ENCODE measurements at regions of chr3 and their contacts with region 1.

Region 1: GRCh38 chr3:13850158-13850945 is 29.5 kb downstream of the WNT7A start:
- DNase-seq: peak; percentile 94
- H3K4me3 ChIP-seq: no peak overlapping the region
- H3K27ac ChIP-seq: peak overlapping the region; percentile 51
- H3K4me1 ChIP-seq: peaks cover 69% of the 10 kb centered on the region
- H3K27me3 ChIP-seq: no peaks in the 10 kb centered on the region
- CTCF ChIP-seq: no peak

Region 2: GRCh38 chr3:13788522-13789432 is 61.6 kb before region 1 on chr3:
- CTCF ChIA-PET with region 1: interaction called, 5 read pairs
- dilution Hi-C with region 1: loop called (anchors 5 kb)
- in situ Hi-C with region 1: no loop called
- intact Hi-C with region 1: no loop called
- DNase-seq: no peak
- H3K4me3 ChIP-seq: no peak overlapping the region
- H3K27ac ChIP-seq: no peak overlapping the region
- H3K4me1 ChIP-seq: no peaks in the 10 kb centered on the region
- H3K27me3 ChIP-seq: no peaks in the 10 kb centered on the region
- CTCF ChIP-seq: no peak

Region 3: GRCh38 chr3:13836741-13837480 is 13.4 kb before region 1 on chr3:
- CTCF ChIA-PET with region 1: no interaction called
- dilution Hi-C with region 1: no loop called
- in situ Hi-C with region 1: no loop called
- intact Hi-C with region 1: loop called (anchors 1 kb)
- DNase-seq: peak; percentile 57
- H3K4me3 ChIP-seq: no peak overlapping the region
- H3K27ac ChIP-seq: no peak overlapping the region
- H3K4me1 ChIP-seq: peaks cover 47% of the 10 kb centered on the region
- H3K27me3 ChIP-seq: no peaks in the 10 kb centered on the region
- CTCF ChIP-seq: peak; percentile 18 to 64

Region 4: DNA sequence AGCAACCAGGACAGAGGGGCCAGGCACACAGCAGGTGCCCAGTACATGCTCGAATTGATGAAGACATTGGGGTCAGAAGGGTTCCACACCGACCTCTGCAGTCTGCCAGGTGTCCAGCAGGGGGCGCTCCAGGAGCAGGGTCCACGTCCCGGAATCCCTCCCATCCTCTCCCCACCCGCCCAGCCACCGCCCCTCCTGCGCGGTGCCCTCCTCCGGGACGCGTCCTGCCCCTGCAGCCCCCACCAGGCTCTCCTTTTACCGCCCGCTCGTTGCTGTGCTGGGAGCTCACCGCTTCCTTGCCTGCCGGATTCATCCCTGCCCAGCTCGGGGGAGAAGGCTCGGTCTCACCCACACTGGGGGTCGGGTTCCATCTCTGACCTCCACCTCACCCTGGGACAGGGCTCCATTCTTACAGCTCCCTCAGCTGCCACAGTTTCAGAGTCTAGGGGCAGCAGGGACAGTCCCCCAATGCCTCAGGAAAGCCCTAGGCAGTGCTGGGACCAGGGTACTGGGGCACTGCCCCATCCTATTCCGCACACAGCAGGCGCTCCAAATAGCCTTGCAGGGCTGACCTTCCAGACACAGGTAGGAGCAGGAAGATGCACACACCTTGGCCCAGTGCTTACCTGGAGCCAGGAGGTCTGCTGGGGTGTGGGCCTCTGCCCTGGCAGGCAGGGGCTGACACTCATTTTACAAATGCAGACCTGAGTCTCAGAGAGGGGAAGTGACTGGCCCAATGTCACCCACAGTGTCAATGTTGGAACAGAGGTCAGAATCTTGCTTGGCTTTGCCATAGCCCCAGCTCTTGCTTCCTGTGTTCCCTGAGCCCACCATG is 658.8 kb after region 1 on chr3:
- CTCF ChIA-PET with region 1: interaction called, 17 read pairs
- dilution Hi-C with region 1: no loop called
- in situ Hi-C with region 1: no loop called
- intact Hi-C with region 1: no loop called
- DNase-seq: no peak
- H3K4me3 ChIP-seq: peak overlapping the region in 1 of 3 experiments; percentile 11
- H3K27ac ChIP-seq: no peak overlapping the region
- H3K4me1 ChIP-seq: peaks cover 2% of the 10 kb centered on the region
- H3K27me3 ChIP-seq: no peaks in the 10 kb centered on the region
- CTCF ChIP-seq: peak; percentile 67 to 86